ENCODE measurements at regions of chr9 and their contacts with region 1.

Region 1: DNA sequence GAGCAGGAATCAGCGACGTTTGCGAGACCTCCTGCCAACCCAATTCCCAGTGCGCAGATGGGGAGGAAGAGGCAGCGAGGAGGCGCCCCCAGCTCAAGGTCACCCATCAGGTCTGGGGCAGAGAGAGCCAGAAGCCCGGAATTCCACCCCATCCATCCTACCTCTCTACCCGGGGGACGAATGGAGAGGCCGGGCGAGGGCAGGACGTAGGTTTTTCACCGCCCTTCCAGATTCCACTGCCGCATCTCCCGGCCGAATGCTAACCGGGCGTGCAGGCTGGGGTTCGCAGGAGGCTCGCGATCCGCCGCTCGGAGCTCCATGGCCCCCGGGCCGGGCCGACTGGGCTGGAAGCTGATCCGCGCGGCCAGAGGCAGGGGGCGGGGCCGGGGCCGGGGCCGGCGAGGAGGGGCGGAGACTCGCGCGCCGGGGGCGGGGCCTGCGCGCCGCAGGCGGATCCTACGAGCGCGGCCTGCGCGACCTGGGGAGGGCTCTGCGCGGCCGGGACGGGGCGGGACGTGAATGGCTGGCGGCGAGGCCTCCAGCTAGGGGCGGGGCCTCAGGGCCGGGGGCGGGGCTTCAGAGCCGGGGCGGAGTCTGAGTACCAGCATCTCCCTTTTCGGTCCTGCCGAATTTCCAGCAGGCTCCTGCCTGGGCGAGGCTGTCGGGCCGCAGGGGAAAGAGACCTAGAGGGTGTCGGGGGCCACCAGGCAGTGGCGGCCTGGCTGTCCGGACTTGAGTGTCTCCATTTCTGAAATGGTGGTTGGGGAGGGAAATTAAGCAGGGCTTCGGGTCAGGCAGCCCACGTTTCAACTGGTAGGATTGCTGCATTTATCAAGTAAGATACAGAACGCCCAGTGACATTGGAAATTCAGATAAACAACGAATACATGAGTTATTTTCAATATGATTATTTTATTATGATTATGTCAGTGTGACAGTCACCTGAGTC is at the start of gene ST6GALNAC4:
- DNase-seq: no peak
- H3K4me3 ChIP-seq: peak within 1 kb of the TSS; percentile 74
- CTCF ChIP-seq: no peak

Region 2: DNA sequence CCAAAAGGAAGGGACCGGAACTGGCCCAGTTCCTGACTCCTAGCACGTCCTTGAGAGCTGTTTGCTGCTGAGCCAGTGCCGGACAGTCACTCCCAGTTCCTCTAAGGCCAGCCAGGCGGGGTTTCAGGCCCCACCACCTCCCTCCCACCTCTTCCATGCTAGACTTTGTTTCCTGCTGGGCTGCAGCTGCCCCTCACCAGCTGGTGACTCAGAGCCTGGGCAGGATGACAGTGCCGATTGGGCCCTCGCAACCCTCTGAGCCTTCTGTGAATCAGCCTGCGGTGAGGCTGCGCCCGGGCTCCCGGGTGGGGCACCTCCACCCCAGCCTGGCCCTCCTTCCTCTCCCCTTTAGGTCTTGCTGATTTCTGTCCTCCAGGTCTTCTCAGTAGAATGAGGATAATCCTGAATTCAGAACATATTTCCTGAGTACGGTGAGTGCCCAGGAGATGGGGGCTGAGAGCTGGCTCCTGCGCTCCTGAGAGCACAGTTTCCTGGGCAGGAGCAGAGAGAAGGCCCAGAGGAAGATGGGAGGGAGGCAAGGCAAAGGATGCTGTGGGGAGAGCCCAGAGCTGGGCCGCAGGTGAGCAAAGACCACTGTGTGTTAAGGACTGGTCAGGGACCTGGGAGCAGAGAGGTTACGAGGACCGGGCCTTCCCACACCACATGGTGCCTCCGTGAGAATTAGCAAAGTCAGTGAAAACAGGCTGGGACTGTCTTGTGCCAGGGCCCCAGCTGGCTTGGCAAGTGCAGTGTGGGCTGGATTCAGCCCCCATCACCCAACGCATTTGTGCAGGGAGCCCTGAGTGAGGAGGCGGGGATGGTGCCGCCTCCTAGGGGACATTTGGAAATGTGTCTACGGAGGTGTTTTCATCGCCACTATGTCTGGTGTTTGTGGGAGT is 337.7 kb before region 1 on chr9:
- CTCF ChIA-PET with region 1: interaction called, 10 read pairs
- POLR2A ChIA-PET with region 1: interaction called, 3 read pairs
- DNase-seq: peak; percentile 84
- H3K4me3 ChIP-seq: peak overlapping the region; percentile 57
- CTCF ChIP-seq: peak; percentile 36

Region 3: GRCh38 chr9:127611899-127612790 is 304.8 kb before region 1 on chr9 and contains the start of gene STXBP1:
- CTCF ChIA-PET with region 1: interaction called, 10 read pairs
- POLR2A ChIA-PET with region 1: no interaction called
- DNase-seq: no peak
- H3K4me3 ChIP-seq: peak within 1 kb of the TSS; percentile 79
- CTCF ChIP-seq: peak; percentile 32

Region 4: DNA sequence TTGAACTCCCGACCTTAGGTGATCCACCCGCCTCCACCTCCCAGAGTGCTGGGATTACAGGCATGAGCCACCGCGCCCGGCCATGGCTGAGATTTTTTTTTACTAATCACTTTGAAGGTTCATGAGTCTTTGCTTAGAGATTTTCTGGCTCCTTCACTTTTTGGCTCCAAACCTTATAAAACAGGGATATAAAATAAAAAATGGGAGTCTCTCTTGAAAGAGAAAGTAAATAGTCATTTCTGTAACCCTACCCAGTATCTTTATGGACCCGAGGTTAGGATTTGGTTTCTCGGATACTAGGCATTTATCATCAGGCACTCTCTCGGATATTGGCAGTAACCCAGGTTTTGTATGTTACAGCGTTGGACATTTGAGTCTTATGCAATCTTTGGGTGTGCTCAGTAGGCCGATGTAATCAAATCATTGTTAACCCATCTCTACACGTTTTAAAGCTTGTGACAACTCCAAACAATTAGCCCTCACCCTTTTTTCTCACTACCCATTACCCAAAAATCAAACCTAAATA is 279.6 kb before region 1 on chr9:
- CTCF ChIA-PET with region 1: no interaction called
- POLR2A ChIA-PET with region 1: no interaction called
- DNase-seq: peak; percentile 16
- H3K4me3 ChIP-seq: no peak overlapping the region
- CTCF ChIP-seq: no peak

Region 5: GRCh38 chr9:127742435-127743088 is 174.4 kb before region 1 on chr9:
- CTCF ChIA-PET with region 1: interaction called, 27 read pairs
- POLR2A ChIA-PET with region 1: no interaction called
- DNase-seq: no peak
- H3K4me3 ChIP-seq: peak overlapping the region; percentile 51
- CTCF ChIP-seq: no peak

Region 6: DNA sequence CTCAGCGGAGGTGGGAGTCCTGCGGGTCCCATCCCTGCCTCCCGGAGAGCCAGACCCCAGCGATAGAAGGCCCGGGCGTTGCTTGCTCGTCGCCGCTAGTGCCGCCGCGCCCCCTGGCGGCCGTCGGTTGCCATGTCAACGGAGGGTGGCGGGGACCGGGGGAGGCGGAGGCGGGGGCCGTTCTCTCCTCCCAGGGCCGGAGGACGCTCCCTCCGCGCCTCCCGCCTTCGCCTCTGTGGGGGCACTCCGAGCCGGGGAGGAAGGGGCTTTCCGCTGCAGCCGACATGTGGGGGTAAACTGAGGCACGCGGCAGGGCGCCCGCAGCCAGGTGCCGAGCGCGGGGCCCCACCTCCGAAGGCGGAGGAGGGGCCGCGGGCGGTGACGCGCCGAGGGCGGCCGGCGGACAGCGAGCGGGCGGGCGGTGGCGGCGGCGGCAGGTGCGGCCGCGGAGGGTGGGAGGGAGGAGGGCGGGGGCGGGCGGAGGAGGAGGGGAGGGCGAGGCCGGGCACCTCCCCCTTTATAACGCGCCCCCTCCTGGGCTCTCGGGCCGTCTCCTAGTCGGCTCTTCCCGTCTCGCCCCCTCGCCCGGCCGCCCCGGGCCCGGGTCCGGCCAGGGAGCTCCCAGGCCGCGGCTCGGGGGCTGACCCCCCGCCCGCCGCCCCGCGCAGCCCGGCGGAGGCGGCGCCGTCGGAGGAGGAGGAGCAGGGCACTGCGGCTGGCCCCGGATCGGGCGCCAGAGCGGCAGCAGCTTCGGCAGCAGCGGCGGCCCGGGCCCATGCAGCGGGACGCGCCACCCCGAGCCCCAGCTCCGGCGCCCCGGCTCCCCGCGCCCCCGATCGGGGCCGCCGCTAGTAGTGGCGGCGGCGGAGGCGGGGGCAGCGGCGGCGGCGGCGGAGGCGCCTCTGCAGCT is 131.7 kb before region 1 on chr9:
- CTCF ChIA-PET with region 1: interaction called, 66 read pairs
- POLR2A ChIA-PET with region 1: interaction called, 3 read pairs
- DNase-seq: no peak
- H3K4me3 ChIP-seq: peak overlapping the region; percentile 88
- CTCF ChIP-seq: peak; percentile 87

Region 7: GRCh38 chr9:127796225-127796813 is 120.6 kb before region 1 on chr9:
- CTCF ChIA-PET with region 1: interaction called, 12 read pairs
- POLR2A ChIA-PET with region 1: no interaction called
- DNase-seq: no peak
- H3K4me3 ChIP-seq: no peak overlapping the region
- CTCF ChIP-seq: no peak

Region 8: DNA sequence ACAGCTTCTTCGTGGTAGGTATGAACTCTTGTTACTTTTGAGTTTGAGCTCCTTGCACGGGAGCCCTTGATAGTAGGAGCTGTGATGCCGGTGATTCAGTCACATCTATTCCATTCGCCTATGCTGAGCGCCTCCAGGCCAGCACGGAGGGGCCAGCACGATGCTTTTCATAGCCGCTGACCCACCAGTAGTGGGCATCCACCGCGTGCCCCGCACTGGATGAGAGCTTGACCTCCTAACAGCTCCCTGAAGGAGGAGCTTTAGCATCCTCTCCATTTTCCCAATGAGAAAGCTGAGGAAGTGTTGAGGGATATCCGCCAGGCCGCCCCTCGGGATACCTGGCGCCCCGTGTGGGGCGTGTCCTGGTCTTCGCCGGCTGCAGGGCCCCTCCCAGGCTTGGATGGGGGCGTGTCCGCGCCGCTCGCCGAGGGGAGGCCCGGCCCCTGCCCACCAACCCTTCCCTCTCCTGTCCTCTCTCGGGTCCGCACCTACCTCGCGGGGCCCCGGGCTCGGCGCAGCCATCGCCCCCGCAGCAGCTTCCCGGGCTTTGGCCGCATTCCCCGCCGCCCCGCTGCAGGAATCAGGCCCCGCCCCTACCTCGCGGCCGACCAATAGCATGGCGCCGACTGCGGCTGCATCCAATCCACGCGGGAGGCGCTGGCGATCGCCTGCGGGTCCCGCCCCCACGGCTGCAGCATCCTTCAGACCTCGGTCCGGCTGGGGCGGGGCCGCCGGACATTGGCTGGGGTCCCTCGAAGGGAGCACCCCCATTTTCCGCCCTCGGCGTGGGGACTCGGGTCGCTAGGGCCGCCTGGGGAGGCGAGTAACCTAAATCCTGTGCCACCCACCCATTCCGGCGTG is 13.5 kb after region 1 on chr9 and contains the start of gene PIP5KL1:
- CTCF ChIA-PET with region 1: interaction called, 12 read pairs
- POLR2A ChIA-PET with region 1: no interaction called
- DNase-seq: no peak
- H3K4me3 ChIP-seq: peak within 1 kb of the TSS; percentile 70
- CTCF ChIP-seq: peak; percentile 21